ENCODE measurements at regions of chr1 and their contacts with region 1.

Region 1: DNA sequence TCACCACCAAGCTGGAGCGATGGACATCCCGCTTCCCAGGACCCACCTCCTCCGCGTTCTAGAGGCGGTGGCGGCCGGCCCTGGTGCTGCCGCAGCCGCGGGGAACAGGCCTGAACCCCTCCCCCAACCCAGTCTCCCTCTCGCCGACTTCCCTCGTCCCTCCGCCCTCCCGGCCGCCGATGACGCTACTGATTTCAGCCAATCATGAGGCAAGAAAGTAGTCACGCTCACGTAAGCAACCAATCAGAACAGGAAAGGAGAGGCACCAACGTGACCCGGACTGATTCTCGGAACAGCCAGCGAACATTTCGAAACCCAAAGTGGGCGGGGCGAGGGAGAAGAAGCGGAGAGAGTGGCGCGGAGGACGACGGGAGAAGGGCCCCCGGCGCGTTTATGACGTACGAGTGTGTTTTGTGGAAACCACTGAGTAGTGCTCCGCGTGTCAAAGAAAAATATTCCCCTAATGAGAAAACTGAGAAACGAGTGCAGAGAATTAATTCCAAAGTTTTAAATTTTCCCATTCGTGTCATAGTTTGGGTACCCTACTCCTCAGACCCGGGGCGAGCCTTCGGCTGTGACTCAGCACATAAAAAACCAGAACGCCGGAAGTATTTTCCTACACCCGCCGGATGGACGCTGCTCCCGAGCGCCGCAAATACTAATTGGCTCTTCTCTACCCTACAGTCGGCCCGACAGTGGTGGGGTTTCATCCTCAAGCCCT is at the start of gene NRDC:
- DNase-seq: peak; percentile 98 to 100
- ATAC-seq: peak; percentile 91 to 95 (median 91)
- H3K4me3 ChIP-seq: peak within 1 kb of the TSS; percentile 90
- H3K4me3 Mint-ChIP-seq: no peak within 1 kb of the TSS
- H3K27ac ChIP-seq: peak within 1 kb of the TSS; percentile 96
- H3K27ac Mint-ChIP-seq: no peak within 1 kb of the TSS
- H3K4me1 ChIP-seq: peaks cover 31% of the 10 kb centered on the region
- H3K4me1 Mint-ChIP-seq: peaks cover 10 to 19% of the 10 kb centered on the region in 2 donors
- H3K27me3 ChIP-seq: no peaks in the 10 kb centered on the region
- H3K27me3 Mint-ChIP-seq: peaks cover 18 to 28% of the 10 kb centered on the region in 2 donors
- CTCF ChIP-seq: no peak
- total RNA-seq, gene NRDC: 122 to 165 (median 145) TPM

Region 2: DNA sequence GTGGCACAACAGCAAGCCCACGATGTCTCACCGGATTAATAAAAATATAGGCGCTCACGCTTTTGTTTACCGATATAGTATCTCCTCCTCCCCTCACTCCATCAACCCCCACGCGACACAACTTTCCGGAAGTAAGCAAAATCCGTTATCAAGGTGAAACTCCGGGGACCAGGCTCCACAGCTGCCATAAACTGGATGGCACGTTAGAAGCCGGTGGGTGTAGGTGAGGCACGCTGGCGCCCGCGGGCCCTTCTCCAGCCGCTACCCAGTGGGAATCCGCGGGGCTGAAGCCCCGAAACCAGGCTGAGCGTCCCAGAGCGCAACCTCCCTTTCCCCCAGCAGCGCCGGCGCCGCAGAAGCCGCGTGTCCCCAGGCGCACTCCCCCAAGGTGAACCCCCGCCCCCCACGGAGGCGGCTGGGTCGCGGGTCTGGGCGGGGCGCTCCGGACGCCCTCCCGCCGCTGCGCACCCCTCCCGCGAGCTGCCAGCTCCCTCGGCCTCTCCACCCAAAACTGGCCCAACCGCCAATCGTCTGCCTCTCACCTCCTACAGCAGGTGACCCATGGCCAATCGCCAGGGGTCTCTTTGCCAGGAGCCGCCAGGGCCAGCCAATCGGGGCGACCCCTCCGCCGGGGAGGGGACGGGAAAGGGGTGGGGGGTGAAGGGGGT is 149.5 kb before region 1 on chr1:
- intact Hi-C with region 1: loop called (anchors 2 kb)
- DNase-seq: peak; percentile 89 to 95
- ATAC-seq: peak; percentile 94 to 99 (median 96)
- H3K4me3 ChIP-seq: peak overlapping the region; percentile 90
- H3K4me3 Mint-ChIP-seq: peak overlapping the region; percentile 92
- H3K27ac ChIP-seq: peak overlapping the region; percentile 76
- H3K27ac Mint-ChIP-seq: peak overlapping the region; percentile 83 to 90
- H3K4me1 ChIP-seq: peaks cover 15% of the 10 kb centered on the region
- H3K4me1 Mint-ChIP-seq: peaks cover 21 to 36% of the 10 kb centered on the region in 2 donors
- H3K27me3 ChIP-seq: no peaks in the 10 kb centered on the region
- H3K27me3 Mint-ChIP-seq: no peaks in the 10 kb centered on the region
- CTCF ChIP-seq: no peak

Region 3: DNA sequence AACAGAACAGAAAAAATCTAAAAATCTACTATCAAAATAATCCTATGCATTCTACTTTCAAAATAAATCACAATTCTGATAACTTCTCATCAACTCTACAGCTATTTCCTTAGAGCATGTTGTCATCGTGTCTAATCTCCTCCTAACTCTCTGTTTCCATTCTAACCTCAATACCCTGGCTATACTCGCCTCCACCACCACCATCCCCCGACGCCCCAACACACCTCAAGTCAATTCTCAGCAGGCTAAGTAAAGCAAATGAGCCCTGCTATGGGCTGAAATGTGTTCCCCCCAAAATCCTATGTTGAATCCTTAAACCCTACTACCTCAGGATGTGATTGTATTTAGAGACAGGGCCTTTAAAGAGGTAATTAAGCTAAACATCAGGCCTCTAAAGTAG is 34.8 kb before region 1 on chr1:
- intact Hi-C with region 1: loop called (anchors 5 kb)
- DNase-seq: no peak
- ATAC-seq: no peak
- H3K4me3 ChIP-seq: no peak overlapping the region
- H3K4me3 Mint-ChIP-seq: no peak overlapping the region
- H3K27ac ChIP-seq: no peak overlapping the region
- H3K27ac Mint-ChIP-seq: peak overlapping the region; percentile 27 to 48
- H3K4me1 ChIP-seq: no peaks in the 10 kb centered on the region
- H3K4me1 Mint-ChIP-seq: peaks cover 29 to 46% of the 10 kb centered on the region in 2 donors
- H3K27me3 ChIP-seq: no peaks in the 10 kb centered on the region
- H3K27me3 Mint-ChIP-seq: no peaks in the 10 kb centered on the region
- CTCF ChIP-seq: no peak

Region 4: DNA sequence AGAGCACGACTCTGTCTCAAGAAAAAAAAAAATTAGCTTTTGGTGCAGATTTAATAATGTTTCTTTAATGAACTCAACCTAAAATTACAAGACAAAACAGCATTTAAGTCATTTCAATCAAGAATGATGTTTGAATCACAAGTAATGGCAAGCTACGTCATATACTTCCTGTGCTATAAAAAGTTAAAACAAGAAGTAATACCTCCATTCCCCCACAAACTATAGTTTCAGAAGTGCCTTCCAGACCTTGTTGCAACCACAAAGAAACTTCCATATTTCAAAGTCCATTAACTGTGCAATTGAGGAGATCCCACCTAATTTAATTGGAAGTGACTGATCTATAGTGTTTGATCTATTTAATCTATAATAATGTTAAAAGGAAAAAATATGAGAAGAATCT is 15.4 kb before region 1 on chr1:
- intact Hi-C with region 1: loop called (anchors 1 kb)
- DNase-seq: peak in 1 of 2 donors; percentile 39
- ATAC-seq: peak; percentile 75 to 93 (median 81)
- H3K4me3 ChIP-seq: no peak overlapping the region
- H3K4me3 Mint-ChIP-seq: no peak overlapping the region
- H3K27ac ChIP-seq: peak overlapping the region; percentile 32
- H3K27ac Mint-ChIP-seq: peak overlapping the region; percentile 74 to 79
- H3K4me1 ChIP-seq: peaks cover 4% of the 10 kb centered on the region
- H3K4me1 Mint-ChIP-seq: peaks cover 45 to 47% of the 10 kb centered on the region in 2 donors
- H3K27me3 ChIP-seq: no peaks in the 10 kb centered on the region
- H3K27me3 Mint-ChIP-seq: no peaks in the 10 kb centered on the region
- CTCF ChIP-seq: no peak

Measured in natural killer cell (primary cell).